ENCODE measurements at regions of chr22 and their contacts with region 1.

Region 1: DNA sequence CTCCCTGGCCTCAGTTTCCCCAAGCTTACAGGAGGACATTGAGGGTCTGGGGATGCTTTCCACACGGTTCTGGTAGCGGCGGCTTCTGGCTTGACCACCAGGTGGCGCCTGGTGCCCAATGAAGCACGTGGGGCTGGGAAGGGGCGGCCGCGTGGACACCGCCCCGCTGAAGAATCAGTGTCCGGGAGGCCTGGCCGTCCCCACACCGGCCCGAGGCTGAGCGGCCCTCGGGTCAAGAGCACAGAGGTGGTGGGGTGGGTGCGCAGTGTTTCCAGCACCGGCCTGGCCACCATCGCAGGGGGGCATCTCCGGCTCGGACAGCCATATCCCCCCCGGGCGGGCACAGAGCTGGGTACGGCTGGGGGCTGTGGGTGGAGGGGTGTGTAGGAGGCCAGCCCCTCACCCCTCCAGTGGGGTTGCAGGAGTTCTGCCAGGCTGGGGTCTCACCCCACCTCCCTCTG is 27.8 kb upstream of the PPARA start:
- DNase-seq: peak; percentile 72 to 92 (median 79)
- ATAC-seq: peak; percentile 50 to 72 (median 60)
- H3K4me3 ChIP-seq: no peak overlapping the region
- H3K27ac ChIP-seq: no peak overlapping the region
- H3K4me1 ChIP-seq: peaks cover 0 to 19% (median 6%) of the 10 kb centered on the region in 12 donors
- H3K27me3 ChIP-seq: no peaks in the 10 kb centered on the region
- CTCF ChIP-seq: peak; percentile 92 to 99 (median 95)
- POLR2A ChIP-seq: no peak

Region 2: GRCh38 chr22:45984316-45984916 is 138.1 kb before region 1 on chr22:
- intact Hi-C with region 1: no loop called
- DNase-seq: no peak
- ATAC-seq: no peak
- H3K4me3 ChIP-seq: no peak overlapping the region
- H3K27ac ChIP-seq: no peak overlapping the region
- H3K4me1 ChIP-seq: peaks cover 0 to under 1% (median 0%) of the 10 kb centered on the region in 12 donors
- H3K27me3 ChIP-seq: no peaks in the 10 kb centered on the region
- CTCF ChIP-seq: no peak
- POLR2A ChIP-seq: no peak

Region 3: DNA sequence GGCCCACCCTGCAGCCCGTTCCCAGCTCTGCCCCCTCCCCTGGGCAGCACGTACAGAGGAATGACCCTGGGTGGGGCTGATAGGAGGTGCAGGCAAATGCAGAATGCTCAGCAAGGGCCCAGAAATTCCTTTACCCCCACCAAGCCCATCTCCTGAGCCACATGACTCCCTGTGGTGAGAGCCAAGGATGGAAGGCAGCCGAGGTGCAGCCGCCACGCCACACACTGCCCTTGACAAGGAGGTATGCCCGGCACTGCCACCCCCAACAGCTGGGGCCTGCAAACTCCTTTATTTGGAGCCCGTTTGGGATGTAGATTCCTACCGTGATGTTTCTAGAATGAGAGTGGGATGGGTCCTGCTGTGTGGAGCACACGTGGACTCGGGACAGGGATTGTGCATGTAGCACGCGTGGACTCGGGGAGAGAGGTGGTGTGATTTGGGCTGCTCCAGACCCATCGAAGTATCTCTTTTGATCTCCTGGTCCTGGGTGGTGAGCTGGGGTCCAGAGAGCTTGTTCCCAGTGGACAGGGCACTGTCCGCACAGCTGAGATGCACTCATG is 187.1 kb after region 1 on chr22:
- intact Hi-C with region 1: loop called (anchors 1 to 2 kb)
- DNase-seq: peak in 3 of 5 donors; percentile 44 to 63 (median 54)
- ATAC-seq: peak; percentile 59 to 90 (median 72)
- H3K4me3 ChIP-seq: no peak overlapping the region
- H3K27ac ChIP-seq: peak overlapping the region in 2 of 12 donors; percentile 41 to 42
- H3K4me1 ChIP-seq: peaks cover 0 to 13% (median 0%) of the 10 kb centered on the region in 12 donors
- H3K27me3 ChIP-seq: no peaks in the 10 kb centered on the region
- CTCF ChIP-seq: no peak
- POLR2A ChIP-seq: no peak

Region 4: DNA sequence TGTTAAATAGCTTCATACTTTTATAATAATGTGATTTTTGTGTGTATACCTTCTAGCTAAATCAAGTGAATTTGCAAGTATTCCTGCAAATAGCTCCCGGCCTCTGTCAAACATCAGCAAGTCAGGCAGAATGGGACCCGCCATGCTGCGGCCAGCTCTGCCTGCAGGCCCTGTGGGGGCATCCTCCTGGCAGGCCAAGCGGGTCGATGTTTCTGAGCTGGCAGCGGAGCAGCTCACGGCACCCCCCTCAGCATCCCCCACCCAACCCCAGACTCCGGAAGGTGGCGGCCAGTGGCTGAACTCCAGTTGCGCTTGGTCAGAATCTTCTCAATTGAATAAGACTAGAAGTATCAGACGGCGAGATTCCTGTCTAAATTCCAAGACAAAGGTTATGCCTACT is 193.4 kb after region 1 on chr22:
- intact Hi-C with region 1: loop called (anchors 1 to 2 kb)
- DNase-seq: no peak
- ATAC-seq: no peak
- H3K4me3 ChIP-seq: no peak overlapping the region
- H3K27ac ChIP-seq: no peak overlapping the region
- H3K4me1 ChIP-seq: peaks cover 0 to 5% (median 0%) of the 10 kb centered on the region in 12 donors
- H3K27me3 ChIP-seq: no peaks in the 10 kb centered on the region
- CTCF ChIP-seq: no peak
- POLR2A ChIP-seq: no peak

Measured in heart left ventricle (tissue), 16 donors.